Caco-2 (cell line): ENCODE measurements at regions of chr4 and their contacts with region 1.

Region 1: DNA sequence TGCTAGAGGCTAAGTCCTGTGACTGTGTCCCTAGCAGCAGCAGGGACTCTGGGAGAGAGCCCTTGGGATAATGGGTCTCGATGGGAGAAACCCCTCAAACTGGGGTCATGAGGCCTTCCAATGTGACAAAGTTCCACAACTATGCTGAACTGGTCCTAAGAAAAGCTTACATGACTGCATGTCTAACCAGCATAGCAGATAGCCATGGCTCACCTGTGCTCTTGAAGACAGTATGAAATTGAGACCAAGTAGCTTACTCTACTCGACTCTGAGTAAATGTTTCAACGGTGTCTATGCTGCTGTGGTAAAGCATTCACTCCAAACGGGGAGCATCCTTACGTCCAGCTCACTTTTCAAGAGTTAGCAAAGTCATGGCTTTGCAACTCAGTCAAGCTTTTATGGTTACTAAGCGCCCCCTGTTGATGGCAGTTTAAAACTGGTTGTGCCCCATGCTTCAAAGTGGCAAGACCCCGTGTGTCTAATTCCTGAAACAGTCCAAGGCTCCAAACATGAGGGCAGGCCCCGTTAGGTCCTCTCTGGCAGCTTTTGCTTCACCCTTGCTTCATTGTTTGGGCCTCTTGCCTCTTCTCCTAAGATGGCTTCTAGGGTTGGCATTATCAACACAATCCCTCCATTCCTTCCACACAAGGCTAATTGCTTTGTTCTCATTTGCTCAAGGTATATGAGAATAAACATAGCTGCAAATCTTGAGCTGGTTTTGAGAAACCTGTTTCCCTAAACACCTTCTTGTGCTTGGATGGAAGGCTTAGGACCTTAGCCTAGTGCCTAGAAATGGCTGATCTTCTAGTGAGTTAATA is 46.6 kb downstream of the CCNG2 start:
- DNase-seq: peak; percentile 65 to 72
- H3K4me3 ChIP-seq: no peak overlapping the region
- H3K4me3 Mint-ChIP-seq: no peak overlapping the region
- H3K27ac Mint-ChIP-seq: no peak overlapping the region
- H3K4me1 ChIP-seq: peaks cover 9% of the 10 kb centered on the region; the same call in 1 of the 2 replicates
- H3K4me1 Mint-ChIP-seq: peaks cover 8% of the 10 kb centered on the region
- H3K27me3 ChIP-seq: no peaks in the 10 kb centered on the region
- H3K27me3 Mint-ChIP-seq: no peaks in the 10 kb centered on the region
- CTCF ChIP-seq: peak; percentile 68 to 71

Region 2: GRCh38 chr4:77044461-77045150 is 159.0 kb before region 1 on chr4:
- CTCF ChIA-PET with region 1: interaction called, 21 read pairs
- POLR2A ChIA-PET with region 1: no interaction called
- intact Hi-C with region 1: no loop called
- DNase-seq: peak in 1 of 2 experiments; percentile 29
- H3K4me3 ChIP-seq: no peak overlapping the region
- H3K4me3 Mint-ChIP-seq: peak overlapping the region; percentile 18
- H3K27ac Mint-ChIP-seq: peak overlapping the region; percentile 67
- H3K4me1 ChIP-seq: peaks cover 51% of the 10 kb centered on the region
- H3K4me1 Mint-ChIP-seq: peaks cover 18% of the 10 kb centered on the region
- H3K27me3 ChIP-seq: no peaks in the 10 kb centered on the region
- H3K27me3 Mint-ChIP-seq: no peaks in the 10 kb centered on the region
- CTCF ChIP-seq: peak in 1 of 2 experiments; percentile 54

Region 3: DNA sequence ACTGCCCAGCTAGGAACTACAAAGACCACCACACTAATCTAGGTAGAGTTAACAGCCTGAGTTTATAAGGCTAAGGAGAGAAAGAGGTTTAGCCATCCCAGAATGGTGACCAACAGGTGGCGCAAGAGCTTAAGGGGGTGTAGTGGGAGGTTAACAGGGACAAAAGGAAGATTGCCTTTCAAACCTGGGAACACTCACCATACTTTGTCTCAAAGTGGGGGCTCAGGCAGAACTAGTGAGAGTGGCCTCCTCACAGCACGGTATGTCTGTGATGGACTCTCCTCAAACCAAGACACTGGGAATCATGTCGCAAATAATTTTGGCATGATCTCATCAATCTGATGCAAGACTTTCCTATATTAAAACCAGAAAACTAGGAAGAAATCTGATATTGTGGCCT is 151.2 kb before region 1 on chr4:
- CTCF ChIA-PET with region 1: interaction called, 21 read pairs
- POLR2A ChIA-PET with region 1: no interaction called
- intact Hi-C with region 1: loop called (anchors 1 kb)
- DNase-seq: peak; percentile 61 to 70
- H3K4me3 ChIP-seq: no peak overlapping the region
- H3K4me3 Mint-ChIP-seq: no peak overlapping the region
- H3K27ac Mint-ChIP-seq: peak overlapping the region; percentile 32
- H3K4me1 ChIP-seq: no peaks in the 10 kb centered on the region
- H3K4me1 Mint-ChIP-seq: no peaks in the 10 kb centered on the region
- H3K27me3 ChIP-seq: no peaks in the 10 kb centered on the region
- H3K27me3 Mint-ChIP-seq: no peaks in the 10 kb centered on the region
- CTCF ChIP-seq: peak; percentile 49 to 77

Region 4: DNA sequence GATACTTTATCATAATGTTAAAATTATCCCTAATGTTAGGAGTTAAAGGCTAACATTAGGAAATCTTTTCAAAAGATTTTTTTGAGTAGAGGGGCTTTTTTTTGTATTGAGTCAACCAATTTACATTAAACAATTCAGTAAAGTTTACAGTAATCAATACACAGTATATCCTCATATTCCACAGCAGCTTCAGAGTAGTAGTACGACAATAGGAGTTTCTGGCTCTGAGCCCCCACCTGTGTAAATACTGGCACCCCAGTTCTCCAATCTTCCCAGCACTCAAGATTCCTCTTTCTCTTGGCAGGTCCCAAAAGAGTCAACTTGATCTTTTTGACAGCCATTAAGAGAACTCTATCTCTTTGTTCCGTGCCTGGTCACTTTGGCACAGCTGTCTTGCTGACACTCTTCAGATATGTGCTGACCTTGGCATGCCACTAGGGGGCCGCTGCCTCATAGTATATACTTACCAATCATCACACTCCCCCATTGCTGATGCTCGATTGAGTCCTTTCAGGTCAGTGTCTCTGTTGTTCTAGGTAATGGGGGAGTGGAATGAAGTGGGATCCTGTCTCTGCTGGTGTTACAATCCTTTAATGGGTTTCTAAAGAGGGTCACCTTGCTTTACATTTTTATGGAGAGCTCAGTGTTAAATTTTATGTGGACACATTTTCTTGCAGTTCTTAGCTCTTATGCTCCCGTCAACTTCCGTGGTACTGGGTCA is 108.3 kb before region 1 on chr4:
- CTCF ChIA-PET with region 1: interaction called, 49 read pairs
- POLR2A ChIA-PET with region 1: no interaction called
- intact Hi-C with region 1: loop called (anchors 1 kb)
- DNase-seq: peak; percentile 69 to 72
- H3K4me3 ChIP-seq: no peak overlapping the region
- H3K4me3 Mint-ChIP-seq: no peak overlapping the region
- H3K27ac Mint-ChIP-seq: no peak overlapping the region
- H3K4me1 ChIP-seq: no peaks in the 10 kb centered on the region
- H3K4me1 Mint-ChIP-seq: no peaks in the 10 kb centered on the region
- H3K27me3 ChIP-seq: no peaks in the 10 kb centered on the region
- H3K27me3 Mint-ChIP-seq: no peaks in the 10 kb centered on the region
- CTCF ChIP-seq: peak; percentile 79 to 80

Region 5: GRCh38 chr4:77120886-77121508 is 82.6 kb before region 1 on chr4:
- CTCF ChIA-PET with region 1: interaction called, 30 read pairs
- POLR2A ChIA-PET with region 1: no interaction called
- intact Hi-C with region 1: no loop called
- DNase-seq: peak in 1 of 2 experiments; percentile 12
- H3K4me3 ChIP-seq: no peak overlapping the region
- H3K4me3 Mint-ChIP-seq: no peak overlapping the region
- H3K27ac Mint-ChIP-seq: no peak overlapping the region
- H3K4me1 ChIP-seq: no peaks in the 10 kb centered on the region
- H3K4me1 Mint-ChIP-seq: no peaks in the 10 kb centered on the region
- H3K27me3 ChIP-seq: no peaks in the 10 kb centered on the region; the same call in 1 of the 2 replicates
- H3K27me3 Mint-ChIP-seq: no peaks in the 10 kb centered on the region
- CTCF ChIP-seq: peak in 1 of 2 experiments; percentile 28

Region 6: GRCh38 chr4:77146186-77147078 is 57.2 kb before region 1 on chr4:
- CTCF ChIA-PET with region 1: no interaction called
- POLR2A ChIA-PET with region 1: no interaction called
- intact Hi-C with region 1: loop called (anchors 2 kb)
- DNase-seq: peak in 1 of 2 experiments; percentile 42
- H3K4me3 ChIP-seq: no peak overlapping the region
- H3K4me3 Mint-ChIP-seq: peak overlapping the region; percentile 62
- H3K27ac Mint-ChIP-seq: peak overlapping the region; percentile 64
- H3K4me1 ChIP-seq: peaks cover 32% of the 10 kb centered on the region
- H3K4me1 Mint-ChIP-seq: peaks cover 15% of the 10 kb centered on the region
- H3K27me3 ChIP-seq: no peaks in the 10 kb centered on the region
- H3K27me3 Mint-ChIP-seq: no peaks in the 10 kb centered on the region
- CTCF ChIP-seq: no peak